ENCODE measurements at regions of chr9 and their contacts with region 1.

Region 1: DNA sequence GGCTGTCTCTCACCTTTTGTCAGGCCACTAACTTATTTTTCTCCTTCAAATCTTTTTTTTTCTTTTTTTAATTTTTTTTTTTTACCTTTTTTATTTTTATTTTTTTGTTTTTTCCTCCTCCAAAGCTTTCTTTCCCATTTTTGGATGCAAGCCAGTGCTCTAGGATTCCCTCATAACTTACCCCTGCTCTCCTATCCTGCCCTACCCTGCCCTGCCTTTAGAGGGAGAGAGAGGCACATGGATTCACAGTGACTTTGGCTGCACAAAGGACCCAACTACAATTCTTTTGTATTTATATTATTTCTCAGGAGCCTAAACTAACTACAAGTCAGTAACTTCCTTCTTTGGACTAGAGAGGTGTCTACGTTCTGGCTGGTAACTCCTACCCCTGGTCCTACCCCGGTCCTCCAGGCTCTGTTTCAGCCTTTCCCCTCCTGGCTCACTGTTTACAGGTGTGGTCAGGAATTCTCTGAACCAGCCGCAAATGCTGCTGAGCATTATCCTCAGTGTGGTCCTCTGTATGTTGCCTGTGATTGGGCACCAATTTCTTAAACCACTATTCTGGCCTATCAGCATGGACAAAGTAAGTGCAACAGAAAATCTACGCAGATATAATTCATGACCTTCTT is 8.4 kb upstream of the RUSC2 start:
- DNase-seq: peak; percentile 27 to 71
- ATAC-seq: peak; percentile 68 to 78
- H3K4me3 ChIP-seq: no peak overlapping the region
- H3K27ac ChIP-seq: no peak overlapping the region
- H3K4me1 ChIP-seq: no peaks in the 10 kb centered on the region
- H3K27me3 ChIP-seq: no peaks in the 10 kb centered on the region
- CTCF ChIP-seq: peak; percentile 74 to 89 (median 78)
- POLR2A ChIP-seq: no peak

Region 2: GRCh38 chr9:35258676-35259474 is 222.6 kb before region 1 on chr9:
- in situ Hi-C with region 1: no loop called
- intact Hi-C with region 1: loop called (anchors 5 kb)
- DNase-seq: peak; percentile 46 to 70
- ATAC-seq: peak; percentile 84 to 89
- H3K4me3 ChIP-seq: no peak overlapping the region
- H3K27ac ChIP-seq: peak overlapping the region in 3 of 4 donors; percentile 3 to 47 (median 25)
- H3K4me1 ChIP-seq: peaks cover 10 to 17% of the 10 kb centered on the region in 2 donors
- H3K27me3 ChIP-seq: no peaks in the 10 kb centered on the region
- CTCF ChIP-seq: peak; percentile 53 to 76 (median 69)
- POLR2A ChIP-seq: no peak

Measured in gastrocnemius medialis (tissue), 4 donors.